Posterior cingulate gyrus (tissue), 11 donors: ENCODE measurements at regions of chr2 and their contacts with region 1.

Region 1: DNA sequence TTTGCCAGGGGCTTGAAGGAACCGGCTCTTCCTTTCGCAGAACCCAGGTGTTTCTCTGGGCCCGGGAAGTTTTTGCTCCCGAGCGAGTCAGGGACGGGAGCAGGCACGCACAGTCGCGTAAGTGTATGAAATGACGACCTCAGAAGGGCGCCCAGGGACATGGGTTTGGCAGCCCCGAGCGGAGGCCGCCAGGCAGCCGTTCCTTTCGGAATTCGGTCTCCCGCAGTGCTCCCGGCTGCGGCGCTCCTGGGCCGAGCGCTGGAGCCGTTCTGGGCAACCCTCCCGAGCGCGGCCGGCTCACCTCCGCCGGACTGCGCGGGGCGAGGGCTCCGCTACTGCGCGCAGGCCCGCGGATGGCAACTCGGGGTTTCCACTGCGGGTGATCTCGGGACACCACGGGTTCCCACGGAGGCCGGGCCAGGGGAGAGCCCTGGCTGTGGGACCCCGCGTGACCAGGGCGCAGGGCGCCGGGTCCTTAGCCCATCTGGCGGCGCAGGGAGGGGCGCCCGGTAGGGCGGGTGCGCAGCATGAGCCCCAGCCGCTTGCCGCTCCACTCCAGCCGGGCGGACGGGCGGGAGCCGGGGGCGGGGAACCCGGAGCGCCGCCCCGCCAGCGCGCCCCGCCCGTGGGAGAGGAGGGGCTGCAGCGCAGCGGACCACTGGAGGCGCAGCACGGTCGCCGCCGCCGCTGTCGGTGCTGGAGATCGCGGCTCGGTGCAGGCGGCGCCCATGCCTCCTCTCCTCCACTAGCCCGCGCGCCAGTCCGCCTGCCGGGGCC is at the start of gene OSBPL6:
- DNase-seq: peak; percentile 60 to 97 (median 82)

Region 2: DNA sequence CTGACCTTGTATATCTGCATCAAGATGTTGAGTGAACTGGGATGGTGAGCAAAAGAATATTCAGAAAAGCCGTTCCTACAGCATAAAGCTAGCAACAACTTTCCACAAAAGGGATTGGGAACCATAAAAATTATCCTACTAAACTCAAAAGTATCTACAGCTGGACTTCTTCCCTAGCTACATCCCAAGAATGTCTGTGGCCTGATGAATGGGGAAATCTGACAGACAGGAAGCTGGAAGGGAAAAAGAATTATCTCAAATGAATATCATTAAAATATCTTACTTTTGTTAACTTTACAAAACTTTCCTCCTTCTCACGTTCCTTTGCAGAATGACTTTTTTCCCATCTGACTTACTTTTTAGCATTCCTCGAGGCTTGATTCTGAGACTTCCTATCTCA is 272.3 kb before region 1 on chr2:
- intact Hi-C with region 1: no loop called
- DNase-seq: no peak

Region 3: DNA sequence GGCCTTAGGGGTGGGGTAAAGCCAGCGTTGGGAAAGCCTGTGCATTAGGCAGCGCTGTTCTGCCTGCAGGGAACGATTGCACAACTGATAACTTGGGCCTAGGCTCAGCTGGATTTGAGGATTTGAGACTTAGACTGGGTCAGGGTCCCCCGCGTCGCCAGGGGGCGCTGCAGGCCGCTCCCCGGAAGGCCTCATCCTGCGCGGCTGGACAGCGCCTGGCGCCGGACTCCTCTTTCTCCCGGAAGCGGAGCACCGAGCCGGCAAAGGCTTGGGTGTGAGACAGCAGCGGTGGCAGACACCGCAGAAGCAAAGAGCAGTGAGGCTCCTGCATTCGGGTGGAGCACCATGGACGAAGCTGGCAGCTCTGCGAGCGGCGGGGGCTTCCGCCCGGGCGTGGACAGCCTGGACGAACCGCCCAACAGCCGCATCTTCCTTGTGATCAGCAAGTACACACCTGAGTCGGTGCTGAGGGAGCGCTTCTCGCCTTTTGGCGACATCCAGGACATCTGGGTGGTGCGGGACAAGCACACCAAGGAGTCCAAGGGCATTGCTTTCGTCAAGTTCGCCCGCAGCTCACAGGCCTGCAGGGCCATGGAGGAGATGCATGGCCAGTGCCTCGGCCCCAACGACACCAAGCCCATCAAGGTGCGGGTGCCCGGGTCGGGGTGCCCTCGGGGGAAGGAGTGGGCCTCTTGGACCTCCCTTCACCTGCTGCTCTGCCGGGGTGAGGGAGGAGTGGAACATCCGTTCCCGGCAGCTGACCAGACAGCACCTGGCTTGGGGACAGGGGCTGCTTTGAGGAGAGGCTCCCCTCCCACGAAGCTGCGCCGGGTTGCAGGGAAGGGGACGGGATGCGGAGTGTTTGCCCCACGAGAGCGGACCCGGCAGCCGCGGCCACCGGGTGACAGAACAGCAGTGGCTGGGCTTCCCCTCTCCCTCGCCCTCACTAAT is 81.5 kb before region 1 on chr2 and contains the start of gene RBM45:
- intact Hi-C with region 1: loop called (anchors 5 kb)
- DNase-seq: peak; percentile 77 to 98 (median 88)